Activated naive CD4-positive, alpha-beta T cell treated with anti-CD3 and anti-CD28 coated beads for 36 hours (primary cell): ENCODE measurements at regions of chr16 and their contacts with region 1.

Region 1: GRCh38 chr16:87877938-87878507 is 8.7 kb upstream of the SLC7A5 start:
- DNase-seq: peak; percentile 71
- H3K4me3 Mint-ChIP-seq: no peak overlapping the region
- H3K27ac Mint-ChIP-seq: no peak overlapping the region
- H3K4me1 Mint-ChIP-seq: peaks cover 47% of the 10 kb centered on the region
- H3K27me3 Mint-ChIP-seq: peaks cover 5% of the 10 kb centered on the region

Region 2: DNA sequence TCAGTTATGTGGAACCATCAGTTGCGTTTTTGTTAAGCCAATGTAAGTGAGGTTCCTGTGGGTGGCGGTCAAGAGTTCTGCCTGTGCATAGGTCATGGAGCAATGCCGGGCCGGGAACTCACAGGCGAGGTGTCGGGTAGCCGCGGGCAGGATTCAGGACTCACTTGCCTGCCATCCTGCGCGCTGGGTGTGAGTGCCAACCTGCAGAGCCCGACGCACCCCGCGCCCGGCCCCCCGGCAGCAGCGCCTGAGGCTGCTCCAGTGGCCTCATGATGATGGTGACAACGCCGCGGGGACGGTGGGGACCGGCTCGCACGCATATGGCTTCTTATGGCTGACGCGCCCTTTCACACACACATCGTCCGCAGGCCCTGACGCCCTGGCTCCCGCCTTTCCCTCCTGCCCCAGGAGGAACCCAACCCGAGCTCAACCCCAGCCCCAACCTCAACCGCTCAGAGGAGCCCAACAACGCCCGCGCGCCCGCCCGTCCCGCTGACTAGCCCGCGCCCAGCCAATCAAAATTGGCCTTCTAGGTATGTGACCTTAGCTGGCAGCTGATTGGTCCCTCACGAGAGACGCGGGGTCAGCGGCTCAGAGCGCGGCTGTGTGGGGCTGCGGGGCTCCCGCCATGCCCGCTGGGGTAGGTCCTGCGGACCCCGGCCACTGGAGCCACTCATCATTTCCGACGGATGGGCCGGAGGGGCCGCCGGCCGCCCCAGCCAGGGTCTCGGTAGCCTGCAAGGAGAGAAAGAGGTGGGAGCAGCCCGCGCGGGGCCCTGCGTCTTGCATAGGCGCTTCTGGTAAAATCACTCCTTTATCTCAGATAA is 560.9 kb before region 1 on chr16 and contains the start of gene C16orf95:
- CTCF ChIA-PET with region 1: no interaction called
- intact Hi-C with region 1: loop called (anchors 5 kb)
- DNase-seq: peak; percentile 98
- H3K4me3 Mint-ChIP-seq: peak within 1 kb of the TSS; percentile 88
- H3K27ac Mint-ChIP-seq: peak within 1 kb of the TSS; percentile 91
- H3K4me1 Mint-ChIP-seq: peaks cover 17% of the 10 kb centered on the region
- H3K27me3 Mint-ChIP-seq: no peaks in the 10 kb centered on the region
- total RNA-seq, gene C16orf95: 17.2 to 23.4 TPM

Region 3: GRCh38 chr16:87924422-87925298 is 46.6 kb after region 1 on chr16:
- CTCF ChIA-PET with region 1: no interaction called
- intact Hi-C with region 1: no loop called
- DNase-seq: no peak
- H3K4me3 Mint-ChIP-seq: no peak overlapping the region
- H3K27ac Mint-ChIP-seq: no peak overlapping the region
- H3K4me1 Mint-ChIP-seq: peaks cover 9% of the 10 kb centered on the region
- H3K27me3 Mint-ChIP-seq: no peaks in the 10 kb centered on the region

Region 4: GRCh38 chr16:88208112-88208511 is 330.1 kb after region 1 on chr16:
- CTCF ChIA-PET with region 1: no interaction called
- intact Hi-C with region 1: no loop called
- DNase-seq: no peak
- H3K4me3 Mint-ChIP-seq: no peak overlapping the region
- H3K27ac Mint-ChIP-seq: no peak overlapping the region
- H3K4me1 Mint-ChIP-seq: no peaks in the 10 kb centered on the region
- H3K27me3 Mint-ChIP-seq: no peaks in the 10 kb centered on the region

Region 5: GRCh38 chr16:88298181-88298832 is 420.3 kb after region 1 on chr16:
- CTCF ChIA-PET with region 1: no interaction called
- intact Hi-C with region 1: no loop called
- DNase-seq: no peak
- H3K4me3 Mint-ChIP-seq: no peak overlapping the region
- H3K27ac Mint-ChIP-seq: no peak overlapping the region
- H3K4me1 Mint-ChIP-seq: no peaks in the 10 kb centered on the region
- H3K27me3 Mint-ChIP-seq: peaks cover 4% of the 10 kb centered on the region